Pancreas (tissue), 10 donors: ENCODE measurements at regions of chr17 and their contacts with region 1.

Region 1: DNA sequence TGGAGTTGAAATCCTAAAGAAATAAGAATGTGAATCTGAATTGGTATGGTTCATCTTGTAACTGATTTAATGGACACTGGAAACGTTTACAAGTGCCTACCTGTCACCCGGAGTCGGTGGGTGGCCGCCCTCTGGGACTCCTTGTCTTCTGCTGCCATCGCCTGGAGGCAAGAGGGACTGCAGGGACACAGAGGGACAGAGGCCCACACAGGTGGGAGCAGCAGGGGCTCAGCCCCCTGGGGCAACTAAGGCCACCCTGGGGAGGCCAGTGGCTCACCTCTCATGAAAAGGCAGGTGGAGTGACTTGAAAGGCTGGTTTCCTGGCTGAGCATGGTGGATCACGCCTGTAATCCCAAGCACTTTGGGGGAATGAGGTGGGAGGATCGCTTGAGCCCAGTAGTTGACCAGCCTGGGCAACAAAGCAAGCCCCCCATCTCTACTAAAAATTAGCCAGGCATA is 23.2 kb downstream of the TMEM92 start:
- DNase-seq: peak; percentile 59 to 92 (median 83)
- ATAC-seq: peak; percentile 85 to 100 (median 98)
- H3K4me3 ChIP-seq: no peak overlapping the region
- H3K27ac ChIP-seq: no peak overlapping the region
- H3K4me1 ChIP-seq: no peaks in the 10 kb centered on the region
- H3K27me3 ChIP-seq: no peaks in the 10 kb centered on the region
- CTCF ChIP-seq: peak; percentile 76 to 91 (median 90)

Region 2: DNA sequence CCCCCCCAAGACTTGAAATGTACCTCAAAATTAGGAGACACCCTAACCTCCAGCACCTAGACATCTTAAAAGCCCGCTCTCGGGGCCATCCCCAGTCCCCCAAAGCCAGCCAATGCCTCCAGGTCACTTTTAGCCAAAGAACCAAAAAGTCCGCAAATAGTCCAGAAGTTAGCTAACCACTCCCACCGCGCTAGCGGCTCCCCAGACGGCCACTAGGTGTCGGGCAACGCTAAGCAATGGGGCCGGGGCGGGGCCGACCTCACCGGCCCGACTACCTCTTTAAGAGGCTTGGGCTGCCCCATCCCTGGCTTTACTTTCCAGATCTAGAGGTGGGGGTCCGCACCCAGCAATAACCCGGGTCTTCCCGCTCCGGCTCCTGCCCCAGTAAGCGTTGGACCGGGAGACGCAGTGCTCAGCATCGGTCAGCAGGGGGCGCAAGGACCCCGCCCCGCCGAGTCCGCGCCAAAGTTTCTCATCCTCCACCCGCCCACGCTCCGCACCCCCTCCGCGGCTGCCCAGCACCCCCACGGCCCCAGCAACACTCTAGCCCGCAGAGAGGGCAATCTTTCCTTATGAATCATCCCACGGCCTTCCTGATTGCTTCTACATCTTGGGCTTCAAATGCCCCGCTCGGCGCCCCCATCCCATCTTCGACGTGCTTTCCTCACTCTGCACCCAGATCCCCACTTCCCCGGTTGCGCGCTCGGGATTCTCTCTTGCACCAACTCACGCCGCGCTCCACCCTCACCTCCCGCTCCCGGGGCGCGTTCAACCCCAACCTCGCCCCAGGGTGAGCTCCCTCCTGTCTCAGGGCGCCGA is 96.8 kb before region 1 on chr17:
- intact Hi-C with region 1: loop called in 2 of 3 experiments (anchors 5 kb)
- DNase-seq: peak; percentile 79 to 94 (median 90)
- ATAC-seq: peak; percentile 86 to 91 (median 88)
- H3K4me3 ChIP-seq: peak overlapping the region; percentile 13 to 51 (median 34)
- H3K27ac ChIP-seq: peak overlapping the region; percentile 20 to 79 (median 42)
- H3K4me1 ChIP-seq: peaks cover 0 to 4% (median 3%) of the 10 kb centered on the region in 3 donors
- H3K27me3 ChIP-seq: peaks cover 0 to 6% (median 2%) of the 10 kb centered on the region in 4 donors
- CTCF ChIP-seq: peak; percentile 95 to 100 (median 99)